Activated CD4-positive, alpha-beta T cell treated with anti-CD3 and anti-CD28 coated beads, Interleukin-2, amount 10 ng/mL, durations not matched to agents 7 days and 5 days (primary cell): ENCODE measurements at regions of chr3 and their contacts with region 1.

Region 1: GRCh38 chr3:157572559-157573270 is 69.5 kb upstream of the VEPH1 start:
- DNase-seq: peak; percentile 33
- H3K4me3 Mint-ChIP-seq: no peak overlapping the region
- H3K27ac Mint-ChIP-seq: no peak overlapping the region
- H3K4me1 Mint-ChIP-seq: no peaks in the 10 kb centered on the region
- H3K27me3 Mint-ChIP-seq: peaks cover 13% of the 10 kb centered on the region

Region 2: DNA sequence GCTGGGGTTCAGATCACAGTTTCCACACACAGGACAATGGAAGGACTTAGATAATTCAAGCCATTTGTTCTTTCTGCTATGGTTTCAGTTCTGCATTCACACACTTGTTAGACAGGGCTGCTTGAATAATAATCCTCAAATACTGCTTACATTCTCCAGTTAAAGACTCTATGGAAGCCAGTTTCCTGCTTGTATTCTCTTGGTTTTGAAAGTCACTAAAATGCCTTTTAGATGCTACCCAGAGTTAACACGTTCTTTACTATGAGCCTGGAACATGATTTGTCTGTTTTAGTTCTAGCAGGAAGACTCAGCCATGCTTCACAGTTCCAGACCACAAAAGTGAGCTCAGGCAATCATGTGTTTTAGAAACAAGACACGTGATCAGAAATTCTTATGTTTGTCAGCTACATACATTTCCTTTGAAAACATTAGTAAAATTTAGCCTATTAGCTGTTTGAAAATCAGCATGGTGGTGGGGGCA is 594.2 kb before region 1 on chr3:
- CTCF ChIA-PET with region 1: no interaction called
- POLR2A ChIA-PET with region 1: no interaction called
- DNase-seq: no peak
- H3K4me3 Mint-ChIP-seq: no peak overlapping the region
- H3K27ac Mint-ChIP-seq: no peak overlapping the region
- H3K4me1 Mint-ChIP-seq: peaks cover 9% of the 10 kb centered on the region
- H3K27me3 Mint-ChIP-seq: peaks cover 13% of the 10 kb centered on the region

Region 3: DNA sequence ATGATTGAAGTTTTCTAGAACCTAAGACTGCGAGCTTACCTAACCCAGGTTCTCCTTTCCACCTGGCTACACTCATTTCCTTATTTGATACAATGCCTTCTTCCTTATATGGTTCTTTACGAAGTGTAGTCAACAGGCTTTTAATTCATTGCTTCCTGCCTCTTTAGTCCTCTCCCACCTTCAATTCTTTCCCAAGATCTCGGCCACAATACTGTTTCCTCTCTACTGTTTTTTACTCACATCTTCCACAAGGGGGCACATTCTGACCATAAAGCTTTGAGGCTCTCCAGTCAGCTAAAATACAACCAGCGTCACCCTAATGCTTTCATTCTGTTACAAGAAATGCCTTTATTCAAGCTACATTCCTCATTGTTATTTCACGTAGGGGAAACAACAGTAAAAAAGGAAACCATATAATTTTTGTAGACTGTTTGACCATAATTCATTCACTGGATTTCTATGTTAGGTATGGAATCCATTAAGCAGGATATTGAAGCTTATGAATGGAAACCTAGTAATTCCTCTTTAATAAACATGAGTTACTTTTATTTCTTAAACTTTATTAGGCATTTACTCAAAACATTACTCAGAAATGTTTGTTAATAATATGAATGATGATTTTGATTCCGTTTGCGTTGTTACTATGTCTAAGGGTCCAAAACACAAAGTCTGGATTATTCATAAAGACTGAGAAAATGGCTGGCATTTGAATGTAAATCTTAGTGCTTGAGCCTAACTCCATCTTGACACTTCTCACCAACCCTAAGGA is 40.0 kb before region 1 on chr3:
- CTCF ChIA-PET with region 1: interaction called, 21 read pairs
- POLR2A ChIA-PET with region 1: interaction called, 3 read pairs
- DNase-seq: peak; percentile 41
- H3K4me3 Mint-ChIP-seq: no peak overlapping the region
- H3K27ac Mint-ChIP-seq: no peak overlapping the region
- H3K4me1 Mint-ChIP-seq: no peaks in the 10 kb centered on the region
- H3K27me3 Mint-ChIP-seq: peaks cover 10% of the 10 kb centered on the region

Region 4: DNA sequence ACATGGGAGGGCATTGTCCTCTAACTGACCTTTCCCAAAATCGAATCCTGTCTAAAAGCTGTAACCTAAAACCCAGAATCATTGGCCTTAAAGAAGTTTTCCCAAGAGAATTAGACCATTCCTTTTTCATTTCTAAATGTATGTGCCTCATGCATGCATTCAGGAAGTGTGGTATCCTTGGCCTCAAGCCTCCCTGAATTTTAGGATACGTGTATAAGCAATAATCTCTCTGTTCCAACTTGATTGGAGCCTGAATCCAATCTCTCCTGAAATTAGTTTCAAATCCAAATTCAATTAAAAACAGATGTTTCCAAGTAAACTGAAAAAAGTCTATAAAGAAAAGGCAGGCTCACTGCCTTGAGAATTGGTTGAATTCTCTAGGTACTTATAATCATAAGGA is 16.5 kb after region 1 on chr3:
- CTCF ChIA-PET with region 1: no interaction called
- POLR2A ChIA-PET with region 1: no interaction called
- DNase-seq: no peak
- H3K4me3 Mint-ChIP-seq: no peak overlapping the region
- H3K27ac Mint-ChIP-seq: no peak overlapping the region
- H3K4me1 Mint-ChIP-seq: no peaks in the 10 kb centered on the region
- H3K27me3 Mint-ChIP-seq: peaks cover 15% of the 10 kb centered on the region